ENCODE measurements at regions of chr10 and their contacts with region 1.

Region 1: DNA sequence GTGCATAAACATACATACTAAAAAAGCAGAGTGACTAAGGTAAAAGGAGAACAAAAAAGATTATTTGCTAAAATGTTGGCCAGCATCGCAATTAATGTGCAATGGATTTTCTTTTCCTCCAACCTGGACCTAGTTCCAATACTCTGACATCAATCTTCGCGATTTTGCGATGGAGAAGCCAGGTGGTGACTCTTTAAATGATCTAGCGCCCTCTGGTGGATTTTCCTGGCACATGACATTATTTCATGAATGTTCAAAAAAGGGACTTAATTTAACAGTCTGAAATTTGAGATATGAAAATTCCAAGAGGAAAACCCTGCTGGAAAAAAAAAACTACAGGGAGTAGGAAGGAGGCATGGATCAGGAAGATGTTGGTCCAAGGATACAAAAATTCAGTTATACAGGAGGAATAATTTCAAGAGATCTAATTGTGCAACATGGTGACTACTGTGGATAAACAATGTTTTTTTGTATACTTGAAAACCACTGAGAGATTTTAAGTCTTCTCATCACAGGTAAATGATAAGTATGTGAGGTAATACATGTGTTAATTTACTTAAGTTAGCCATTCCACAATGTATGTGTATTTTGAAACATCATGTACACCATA is 4.3 kb upstream of the KCNMA1 start:
- DNase-seq: peak; percentile 85
- H3K4me3 Mint-ChIP-seq: no peak overlapping the region
- H3K27ac Mint-ChIP-seq: no peak overlapping the region
- H3K4me1 Mint-ChIP-seq: no peaks in the 10 kb centered on the region
- H3K27me3 Mint-ChIP-seq: peaks cover 40% of the 10 kb centered on the region

Region 2: DNA sequence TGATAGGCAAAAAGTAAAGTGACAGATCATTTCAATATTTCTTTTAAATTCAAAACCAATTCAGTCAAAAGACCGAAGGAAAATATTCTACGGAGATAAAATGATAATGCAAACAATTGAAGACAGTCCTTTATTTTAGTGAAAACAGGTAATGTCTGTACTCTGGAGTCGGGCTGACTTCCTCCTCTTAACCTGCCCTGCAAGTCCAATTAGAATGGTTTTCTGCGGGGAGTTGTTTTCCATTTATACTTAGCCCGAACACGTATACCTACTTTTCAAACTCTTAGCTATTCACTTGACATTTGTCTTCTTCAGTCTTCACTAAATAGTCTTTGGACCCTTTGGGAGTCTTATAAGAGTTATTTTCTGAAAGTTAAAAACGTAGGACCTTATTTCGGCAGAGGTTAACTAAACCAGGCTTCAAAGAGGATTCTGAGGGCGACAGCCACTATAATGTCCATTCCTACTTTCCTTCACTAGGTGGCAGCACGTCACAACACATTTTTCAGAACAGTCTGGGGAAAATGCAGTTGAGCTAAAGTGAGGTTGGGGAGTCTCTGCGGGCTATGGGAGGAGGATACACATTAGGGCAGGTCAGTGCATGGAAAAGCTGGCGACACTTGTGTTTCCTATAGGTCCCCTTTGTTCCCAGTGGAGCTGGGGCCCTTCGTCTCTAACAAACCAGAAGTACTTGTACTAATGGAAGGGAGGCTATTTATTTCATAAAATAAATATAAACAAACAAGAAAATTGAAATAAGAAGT is 476.3 kb before region 1 on chr10:
- intact Hi-C with region 1: loop called (anchors 2 kb)
- DNase-seq: peak; percentile 80
- H3K4me3 Mint-ChIP-seq: no peak overlapping the region
- H3K27ac Mint-ChIP-seq: no peak overlapping the region
- H3K4me1 Mint-ChIP-seq: peaks cover 2% of the 10 kb centered on the region
- H3K27me3 Mint-ChIP-seq: peaks cover 20% of the 10 kb centered on the region

Region 3: DNA sequence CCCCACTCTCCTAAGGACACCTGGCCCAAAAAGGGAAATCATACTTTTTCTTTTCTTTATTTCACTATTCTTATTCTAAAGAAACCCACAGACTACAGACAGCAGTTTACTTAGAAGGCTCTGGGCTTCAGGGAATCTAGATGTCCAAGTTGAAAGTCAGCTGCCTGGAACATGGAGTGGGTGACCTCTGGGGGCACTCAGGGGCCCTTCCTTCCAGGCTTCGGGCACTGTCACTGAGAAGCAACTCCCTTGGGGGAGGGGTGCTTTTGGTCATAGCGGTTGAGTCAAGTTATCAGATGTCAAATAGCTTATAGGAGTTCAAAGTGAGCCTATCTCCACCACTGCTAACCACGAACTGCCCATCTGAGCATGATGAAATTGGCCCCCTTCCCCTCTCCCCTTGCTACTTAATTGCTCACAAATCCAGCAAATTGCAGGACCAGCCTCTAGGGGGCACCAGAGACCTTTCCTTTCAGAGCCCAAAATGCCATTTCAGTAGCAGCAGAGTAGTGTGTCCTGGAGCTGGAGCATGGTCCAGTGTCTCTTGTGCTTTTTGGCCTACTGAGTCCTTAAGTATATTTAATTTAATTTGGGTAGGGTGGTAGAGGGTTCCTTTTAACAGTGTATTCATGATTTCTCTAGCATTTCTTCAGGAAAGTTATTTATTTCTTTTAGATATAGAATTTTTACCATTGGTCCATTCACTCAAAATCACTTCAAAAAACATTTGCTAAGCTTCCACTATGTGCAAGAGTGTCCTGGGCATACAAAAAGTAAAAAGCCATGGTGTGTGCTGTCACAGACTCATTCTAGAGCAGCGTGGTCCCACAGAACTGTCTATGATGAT is 468.1 kb before region 1 on chr10:
- intact Hi-C with region 1: loop called (anchors 1 kb)
- DNase-seq: peak; percentile 87
- H3K4me3 Mint-ChIP-seq: no peak overlapping the region
- H3K27ac Mint-ChIP-seq: no peak overlapping the region
- H3K4me1 Mint-ChIP-seq: no peaks in the 10 kb centered on the region
- H3K27me3 Mint-ChIP-seq: peaks cover 4% of the 10 kb centered on the region

Region 4: GRCh38 chr10:77391605-77392235 is 250.2 kb before region 1 on chr10:
- intact Hi-C with region 1: loop called (anchors 10 kb)
- DNase-seq: peak; percentile 74
- H3K4me3 Mint-ChIP-seq: no peak overlapping the region
- H3K27ac Mint-ChIP-seq: no peak overlapping the region
- H3K4me1 Mint-ChIP-seq: peaks cover 4% of the 10 kb centered on the region
- H3K27me3 Mint-ChIP-seq: peaks cover 3% of the 10 kb centered on the region

Region 5: GRCh38 chr10:77524281-77524711 is 117.6 kb before region 1 on chr10:
- intact Hi-C with region 1: no loop called
- DNase-seq: no peak
- H3K4me3 Mint-ChIP-seq: no peak overlapping the region
- H3K27ac Mint-ChIP-seq: no peak overlapping the region
- H3K4me1 Mint-ChIP-seq: no peaks in the 10 kb centered on the region
- H3K27me3 Mint-ChIP-seq: peaks cover 4% of the 10 kb centered on the region

Measured in activated CD4-positive, alpha-beta T cell treated with anti-CD3 and anti-CD28 coated beads, Interleukin-2, amount 10 ng/mL, durations not matched to agents 24 days and 14 days (primary cell).